Naive thymus-derived CD4-positive, alpha-beta T cell (primary cell): ENCODE measurements at regions of chr7 and their contacts with region 1.

Region 1: DNA sequence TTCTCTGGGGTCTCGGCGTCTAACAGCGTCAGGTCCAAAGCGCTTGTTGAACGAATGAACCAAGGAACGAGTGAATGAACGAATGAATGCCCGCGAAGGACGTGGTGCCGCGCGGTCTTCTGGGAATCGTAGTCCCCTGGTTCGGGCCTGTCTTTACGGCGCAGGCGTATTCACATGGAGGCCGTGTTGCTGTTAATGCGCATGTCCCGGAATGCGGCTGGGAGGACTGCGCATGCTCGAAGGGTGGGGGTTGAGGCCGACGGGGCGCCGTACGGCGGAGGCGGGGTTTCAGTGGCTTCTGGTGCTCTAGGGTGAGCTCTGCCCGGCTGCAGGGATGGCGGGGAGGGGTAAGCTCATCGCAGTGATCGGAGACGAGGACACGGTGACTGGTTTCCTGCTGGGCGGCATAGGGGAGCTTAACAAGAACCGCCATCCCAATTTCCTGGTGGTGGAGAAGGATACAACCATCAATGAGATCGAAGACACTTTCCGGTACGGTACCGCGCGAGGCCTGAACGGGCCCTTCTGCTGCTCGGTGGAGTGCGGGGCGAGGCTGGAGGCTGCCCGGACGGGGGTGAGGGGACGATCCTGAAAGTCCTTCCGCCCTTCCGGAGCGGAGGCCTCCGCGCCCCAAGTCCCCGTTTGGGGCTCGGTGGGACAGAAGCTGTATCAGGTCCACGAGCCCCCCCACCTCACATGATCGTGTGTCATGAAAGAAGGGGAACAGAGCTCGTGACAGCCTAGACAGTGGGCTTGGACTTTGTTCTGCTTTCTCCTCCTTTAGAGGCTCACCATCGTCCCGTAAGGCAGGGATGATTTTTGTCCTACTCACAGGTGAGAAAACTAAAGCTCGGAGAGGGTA is at the start of gene ATP6V1F:
- DNase-seq: peak; percentile 97 to 100 (median 99)
- ATAC-seq: peak; percentile 93
- H3K4me3 ChIP-seq: peak within 1 kb of the TSS; percentile 88
- H3K4me3 Mint-ChIP-seq: peak within 1 kb of the TSS; percentile 88 to 100 (median 98)
- H3K27ac ChIP-seq: peak within 1 kb of the TSS; percentile 76
- H3K27ac Mint-ChIP-seq: peak within 1 kb of the TSS; percentile 86 to 99 (median 93)
- H3K4me1 ChIP-seq: peaks cover 12 to 15% of the 10 kb centered on the region in 2 donors
- H3K4me1 Mint-ChIP-seq: peaks cover 21 to 38% (median 33%) of the 10 kb centered on the region in 7 donors
- H3K27me3 ChIP-seq: no peaks in the 10 kb centered on the region
- H3K27me3 Mint-ChIP-seq: peaks cover 0 to 3% (median 0%) of the 10 kb centered on the region in 5 donors
- total RNA-seq, gene ATP6V1F: 58.4 to 116 (median 79.1) TPM

Region 2: GRCh38 chr7:127585044-127585953 is 1277.5 kb before region 1 on chr7 and contains the start of gene GCC1:
- CTCF ChIA-PET with region 1: no interaction called
- POLR2A ChIA-PET with region 1: no interaction called
- intact Hi-C with region 1: loop called in 1 of 2 experiments (anchors 5 kb)
- DNase-seq: peak; percentile 87 to 98 (median 93)
- ATAC-seq: peak; percentile 87
- H3K4me3 ChIP-seq: peak within 1 kb of the TSS; percentile 87
- H3K4me3 Mint-ChIP-seq: peak within 1 kb of the TSS; percentile 86 to 98 (median 92)
- H3K27ac ChIP-seq: peak within 1 kb of the TSS; percentile 88
- H3K27ac Mint-ChIP-seq: peak within 1 kb of the TSS; percentile 77 to 97 (median 94)
- H3K4me1 ChIP-seq: peaks cover 47 to 55% of the 10 kb centered on the region in 2 donors
- H3K4me1 Mint-ChIP-seq: peaks cover 55 to 88% (median 78%) of the 10 kb centered on the region in 7 donors
- H3K27me3 ChIP-seq: no peaks in the 10 kb centered on the region
- H3K27me3 Mint-ChIP-seq: no peaks in the 10 kb centered on the region
- total RNA-seq, gene GCC1: 19.6 to 31.3 (median 23.7) TPM

Region 3: GRCh38 chr7:128409596-128410160 is 453.1 kb before region 1 on chr7 and contains the start of gene IMPDH1:
- CTCF ChIA-PET with region 1: no interaction called
- POLR2A ChIA-PET with region 1: no interaction called
- intact Hi-C with region 1: loop called in 1 of 2 experiments (anchors 1 kb)
- DNase-seq: peak; percentile 73 to 95 (median 83)
- ATAC-seq: peak; percentile 87
- H3K4me3 ChIP-seq: peak within 1 kb of the TSS; percentile 89
- H3K4me3 Mint-ChIP-seq: peak within 1 kb of the TSS; percentile 88 to 95 (median 92)
- H3K27ac ChIP-seq: peak within 1 kb of the TSS; percentile 81
- H3K27ac Mint-ChIP-seq: peak within 1 kb of the TSS; percentile 87 to 93 (median 90)
- H3K4me1 ChIP-seq: peaks cover 15 to 27% of the 10 kb centered on the region in 2 donors
- H3K4me1 Mint-ChIP-seq: peaks cover 12 to 41% (median 38%) of the 10 kb centered on the region in 7 donors
- H3K27me3 ChIP-seq: no peaks in the 10 kb centered on the region
- H3K27me3 Mint-ChIP-seq: peaks cover 0 to 26% (median 0%) of the 10 kb centered on the region in 5 donors
- total RNA-seq, gene IMPDH1: 36.5 to 92.0 (median 44.4) TPM

Region 4: GRCh38 chr7:128739048-128739962 is 123.5 kb before region 1 on chr7 and contains the start of gene CALU:
- CTCF ChIA-PET with region 1: interaction called, 3 read pairs
- POLR2A ChIA-PET with region 1: interaction called, 9 read pairs
- intact Hi-C with region 1: loop called (anchors 1 kb)
- DNase-seq: peak; percentile 87 to 95 (median 94)
- ATAC-seq: peak; percentile 98
- H3K4me3 ChIP-seq: peak within 1 kb of the TSS; percentile 86
- H3K4me3 Mint-ChIP-seq: peak within 1 kb of the TSS; percentile 89 to 100 (median 97)
- H3K27ac ChIP-seq: peak within 1 kb of the TSS; percentile 85
- H3K27ac Mint-ChIP-seq: peak within 1 kb of the TSS; percentile 96 to 99 (median 98)
- H3K4me1 ChIP-seq: peaks cover 13% of the 10 kb centered on the region in 2 donors
- H3K4me1 Mint-ChIP-seq: peaks cover 11 to 52% (median 45%) of the 10 kb centered on the region in 7 donors
- H3K27me3 ChIP-seq: no peaks in the 10 kb centered on the region
- H3K27me3 Mint-ChIP-seq: peaks cover 0 to 5% (median 0%) of the 10 kb centered on the region in 5 donors
- total RNA-seq, gene CALU: 18.6 to 36.2 (median 22.6) TPM

Region 5: GRCh38 chr7:128883622-128884501 is 21.1 kb after region 1 on chr7:
- CTCF ChIA-PET with region 1: interaction called, 4 read pairs
- POLR2A ChIA-PET with region 1: interaction called, 3 read pairs
- intact Hi-C with region 1: loop called (anchors 1 kb)
- DNase-seq: peak; percentile 61 to 88 (median 81)
- ATAC-seq: peak; percentile 82
- H3K4me3 ChIP-seq: peak overlapping the region; percentile 20
- H3K4me3 Mint-ChIP-seq: no peak overlapping the region
- H3K27ac ChIP-seq: no peak overlapping the region
- H3K27ac Mint-ChIP-seq: peak overlapping the region in 1 of 9 donors; percentile 81
- H3K4me1 ChIP-seq: no peaks in the 10 kb centered on the region
- H3K4me1 Mint-ChIP-seq: peaks cover 0 to 3% (median 0%) of the 10 kb centered on the region in 7 donors
- H3K27me3 ChIP-seq: peaks cover 0 to 3% of the 10 kb centered on the region in 2 donors
- H3K27me3 Mint-ChIP-seq: peaks cover 0 to 7% (median 0%) of the 10 kb centered on the region in 5 donors

Region 6: DNA sequence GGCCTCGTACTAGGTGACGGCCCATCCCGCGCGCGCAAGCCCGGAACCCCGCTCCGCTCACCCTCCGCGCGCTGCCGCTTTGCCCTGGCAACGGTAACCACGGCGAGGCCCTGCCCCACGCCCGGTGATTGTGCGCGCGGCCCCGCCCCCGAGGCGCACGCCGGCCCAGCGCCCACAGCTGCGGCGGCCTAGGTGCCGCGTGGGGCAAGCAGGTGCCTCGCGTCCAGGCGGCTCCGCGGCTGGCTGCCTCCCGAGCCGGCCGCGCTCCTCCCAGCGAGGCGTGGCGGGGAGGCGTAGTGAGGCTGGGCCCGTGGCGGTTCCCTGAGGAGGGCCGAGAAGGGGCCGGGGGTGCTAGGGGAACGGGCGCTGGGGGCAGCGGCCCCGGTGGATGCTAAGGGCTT is 639.6 kb after region 1 on chr7 and contains the start of gene SMKR1:
- CTCF ChIA-PET with region 1: no interaction called
- POLR2A ChIA-PET with region 1: no interaction called
- intact Hi-C with region 1: loop called in 1 of 2 experiments (anchors 5 kb)
- DNase-seq: peak; percentile 86 to 94 (median 91)
- ATAC-seq: peak; percentile 98
- H3K4me3 ChIP-seq: peak within 1 kb of the TSS; percentile 64
- H3K4me3 Mint-ChIP-seq: peak within 1 kb of the TSS; percentile 75 to 91 (median 86)
- H3K27ac ChIP-seq: peak within 1 kb of the TSS; percentile 70
- H3K27ac Mint-ChIP-seq: peak within 1 kb of the TSS; percentile 70 to 93 (median 83)
- H3K4me1 ChIP-seq: peaks cover 4 to 7% of the 10 kb centered on the region in 2 donors
- H3K4me1 Mint-ChIP-seq: peaks cover 14 to 22% (median 16%) of the 10 kb centered on the region in 7 donors
- H3K27me3 ChIP-seq: no peaks in the 10 kb centered on the region
- H3K27me3 Mint-ChIP-seq: peaks cover 0 to 23% (median 0%) of the 10 kb centered on the region in 5 donors
- total RNA-seq, gene SMKR1: 1.1 to 2.5 (median 1.4) TPM